K562 (cell line): ENCODE measurements at regions of chr15 and their contacts with region 1.

Region 1: GRCh38 chr15:34049112-34049511 is 10.1 kb upstream of the AVEN start:
- DNase-seq: no peak
- ATAC-seq: no peak
- H3K4me3 ChIP-seq: no peak overlapping the region
- H3K27ac ChIP-seq: no peak overlapping the region
- H3K4me1 ChIP-seq: peaks cover 5 to 8% of the 10 kb centered on the region in 2 experiments; a peak in 4 of 5 replicates
- H3K27me3 ChIP-seq: peaks cover 5% of the 10 kb centered on the region in 2 experiments; a peak in 3 of 5 replicates
- CTCF ChIP-seq: no peak
- EP300 ChIP-seq: no peak
- POLR2A ChIP-seq: no peak
- RAD21 ChIP-seq: no peak

Region 2: DNA sequence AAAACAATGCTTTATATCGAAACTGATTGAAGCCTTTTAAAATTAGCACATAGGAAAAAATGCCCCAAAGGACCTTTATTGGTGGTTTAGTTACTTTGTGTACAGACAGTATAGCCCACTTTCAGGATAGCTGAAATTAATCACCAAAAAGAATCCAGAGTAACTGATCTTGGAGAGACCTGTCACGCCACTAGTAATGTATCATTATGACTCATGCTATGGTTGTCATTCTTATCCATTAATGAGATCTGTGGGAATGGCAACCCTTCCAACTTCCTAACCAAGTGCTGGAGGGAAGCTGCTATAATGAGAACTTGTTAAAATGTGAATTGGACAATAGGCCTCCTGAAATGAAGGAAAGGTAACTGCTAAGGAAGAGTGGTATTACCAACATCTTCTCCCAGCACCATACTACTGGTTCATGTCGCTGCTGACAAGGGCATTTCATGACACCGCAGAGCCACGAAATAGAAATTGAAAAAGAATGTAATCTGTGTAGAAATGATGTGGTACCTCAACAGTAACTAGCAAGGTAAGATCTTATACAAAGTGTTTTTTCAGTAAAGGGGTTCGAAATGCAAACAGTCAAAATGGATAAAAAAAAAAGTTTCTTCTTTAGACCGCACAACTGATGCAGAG is 168.6 kb after region 1 on chr15:
- CTCF ChIA-PET with region 1: no interaction called
- POLR2A ChIA-PET with region 1: no interaction called
- in situ Hi-C with region 1: loop called (anchors 5 kb)
- intact Hi-C with region 1: no loop called
- DNase-seq: peak in 2 of 4 experiments; percentile 17 to 18
- ATAC-seq: peak; percentile 31; the same call in 1 of the 3 replicates
- H3K4me3 ChIP-seq: no peak overlapping the region
- H3K27ac ChIP-seq: no peak overlapping the region
- H3K4me1 ChIP-seq: peaks cover 0 to 3% of the 10 kb centered on the region in 2 experiments; a peak in 1 of 5 replicates
- H3K27me3 ChIP-seq: no peaks in the 10 kb centered on the region
- CTCF ChIP-seq: no peak
- EP300 ChIP-seq: no peak; the same call in 1 of the 2 replicates
- POLR2A ChIP-seq: no peak
- RAD21 ChIP-seq: no peak; a peak in 1 of 4 replicates